PC-3 (cell line): ENCODE measurements at regions of chr11 and their contacts with region 1.

Region 1: GRCh38 chr11:62081378-62082291 is 42.2 kb upstream of the INCENP start:
- DNase-seq: peak; percentile 89
- ATAC-seq: peak; percentile 86
- H3K4me3 ChIP-seq: peak overlapping the region; percentile 21; the same call in 1 of the 2 replicates
- H3K27ac ChIP-seq: no peak overlapping the region
- H3K4me1 ChIP-seq: peaks cover 11% of the 10 kb centered on the region
- H3K27me3 ChIP-seq: no peaks in the 10 kb centered on the region
- CTCF ChIP-seq: peak; percentile 98

Region 2: GRCh38 chr11:61871158-61871597 is 210.5 kb before region 1 on chr11:
- CTCF ChIA-PET with region 1: interaction called, 13 read pairs
- POLR2A ChIA-PET with region 1: no interaction called
- intact Hi-C with region 1: loop called (anchors 1 kb)
- DNase-seq: peak; percentile 87
- ATAC-seq: peak; percentile 93
- H3K4me3 ChIP-seq: peak overlapping the region; percentile 48
- H3K27ac ChIP-seq: no peak overlapping the region
- H3K4me1 ChIP-seq: peaks cover 3% of the 10 kb centered on the region; the same call in 1 of the 2 replicates
- H3K27me3 ChIP-seq: no peaks in the 10 kb centered on the region
- CTCF ChIP-seq: peak; percentile 97

Region 3: DNA sequence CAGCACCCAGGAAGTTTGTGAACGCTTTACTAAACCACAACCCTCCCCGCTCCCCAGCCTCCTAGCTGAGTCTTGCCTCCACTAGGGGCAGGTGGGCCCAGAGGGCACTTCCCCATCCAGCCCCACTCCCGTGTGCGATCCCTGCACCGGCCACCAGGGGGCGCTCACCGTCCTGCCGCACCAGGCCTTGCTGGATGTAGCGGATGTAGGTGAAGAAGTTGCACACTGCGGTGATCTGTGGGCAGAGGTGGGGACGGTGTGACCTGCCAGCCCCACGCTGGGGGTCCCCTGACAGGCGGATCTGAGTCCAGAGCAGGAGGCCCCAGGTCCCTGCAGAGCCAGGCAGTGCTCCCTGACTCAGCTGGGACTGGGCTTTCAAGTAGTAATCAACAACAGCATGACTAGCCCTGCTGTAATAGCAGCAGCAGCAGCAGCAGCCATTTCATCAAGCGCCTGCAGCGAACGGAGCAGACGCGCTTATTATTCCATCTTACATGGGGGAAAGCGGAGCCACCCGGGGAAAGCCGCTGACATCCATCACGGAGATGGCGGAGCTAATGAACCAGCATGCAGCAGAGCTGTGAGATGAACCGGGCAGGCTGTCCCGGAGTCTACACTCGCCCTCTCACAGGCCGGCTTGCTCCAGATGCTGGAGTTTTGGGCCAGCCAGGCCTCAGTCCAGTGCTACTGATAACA is 182.3 kb before region 1 on chr11:
- CTCF ChIA-PET with region 1: interaction called, 41 read pairs
- POLR2A ChIA-PET with region 1: no interaction called
- intact Hi-C with region 1: loop called (anchors 1 kb)
- DNase-seq: peak; percentile 94
- ATAC-seq: peak; percentile 85
- H3K4me3 ChIP-seq: no peak overlapping the region
- H3K27ac ChIP-seq: no peak overlapping the region
- H3K4me1 ChIP-seq: no peaks in the 10 kb centered on the region
- H3K27me3 ChIP-seq: no peaks in the 10 kb centered on the region
- CTCF ChIP-seq: peak; percentile 99

Region 4: GRCh38 chr11:61947486-61948210 is 134.0 kb before region 1 on chr11:
- CTCF ChIA-PET with region 1: interaction called, 14 read pairs
- POLR2A ChIA-PET with region 1: no interaction called
- intact Hi-C with region 1: loop called (anchors 1 kb)
- DNase-seq: peak; percentile 92
- ATAC-seq: peak; percentile 85
- H3K4me3 ChIP-seq: no peak overlapping the region
- H3K27ac ChIP-seq: no peak overlapping the region
- H3K4me1 ChIP-seq: peaks cover 7% of the 10 kb centered on the region; the same call in 1 of the 2 replicates
- H3K27me3 ChIP-seq: no peaks in the 10 kb centered on the region
- CTCF ChIP-seq: peak; percentile 97

Region 5: GRCh38 chr11:62061351-62062222 is 20.0 kb before region 1 on chr11:
- CTCF ChIA-PET with region 1: interaction called, 12 read pairs
- POLR2A ChIA-PET with region 1: no interaction called
- intact Hi-C with region 1: no loop called
- DNase-seq: peak; percentile 68
- ATAC-seq: peak; percentile 57
- H3K4me3 ChIP-seq: no peak overlapping the region
- H3K27ac ChIP-seq: no peak overlapping the region
- H3K4me1 ChIP-seq: no peaks in the 10 kb centered on the region
- H3K27me3 ChIP-seq: no peaks in the 10 kb centered on the region
- CTCF ChIP-seq: peak; percentile 87

Region 6: DNA sequence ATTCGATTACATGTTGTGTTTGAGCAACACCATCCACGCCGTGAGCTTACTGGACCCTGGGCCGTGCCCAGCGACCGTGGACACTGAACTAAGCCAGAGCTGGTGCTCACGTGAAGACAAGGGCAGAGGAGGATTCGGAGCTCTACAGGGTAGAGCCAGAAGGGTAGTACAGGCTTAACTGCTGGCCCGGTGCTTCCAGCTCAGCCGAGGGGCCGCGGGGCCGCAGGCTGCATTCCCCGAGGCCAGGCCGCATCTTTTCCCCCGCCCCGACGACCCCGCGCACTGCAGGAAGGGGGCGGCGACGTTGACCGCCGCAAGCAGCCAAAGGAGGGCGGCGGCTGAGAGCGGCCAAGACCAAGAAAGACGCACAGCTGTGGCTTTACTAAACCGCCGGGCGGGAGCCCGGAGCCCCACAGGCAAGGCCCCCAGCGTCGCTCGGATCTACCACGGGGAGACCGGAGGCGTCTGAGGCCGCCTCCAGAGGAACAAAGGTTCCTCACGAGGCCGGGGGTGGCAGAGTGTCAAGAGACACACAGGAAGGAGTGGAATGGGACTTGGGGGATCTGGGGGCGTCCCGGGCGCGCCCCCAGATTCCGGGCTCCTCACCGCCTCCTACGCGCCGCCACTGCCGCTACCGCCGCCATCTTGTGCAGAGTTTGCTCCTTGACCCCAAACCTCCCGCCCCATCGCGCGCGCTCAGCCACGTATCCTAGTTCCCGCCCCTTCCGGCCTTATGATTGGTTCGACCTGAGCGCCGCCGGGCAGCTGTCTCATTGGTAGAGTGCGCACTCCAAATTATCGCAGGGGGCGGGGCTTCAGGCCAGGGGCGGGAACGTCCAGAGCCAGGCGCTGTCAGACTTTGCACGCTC is 564.6 kb after region 1 on chr11 and contains the start of gene GANAB:
- CTCF ChIA-PET with region 1: no interaction called
- POLR2A ChIA-PET with region 1: no interaction called
- intact Hi-C with region 1: no loop called
- DNase-seq: peak; percentile 99
- ATAC-seq: peak; percentile 98
- H3K4me3 ChIP-seq: peak within 1 kb of the TSS; percentile 95
- H3K27ac ChIP-seq: peak within 1 kb of the TSS; percentile 64
- H3K4me1 ChIP-seq: peaks cover 10% of the 10 kb centered on the region
- H3K27me3 ChIP-seq: no peaks in the 10 kb centered on the region
- CTCF ChIP-seq: no peak
- total RNA-seq, gene GANAB: 274 and 290 TPM in 2 replicates